Activated CD8-positive, alpha-beta memory T cell treated with anti-CD3 and anti-CD28 coated beads, Interleukin-2, amount 10 ng/mL, durations not matched to agents 7 days and 5 days (primary cell): ENCODE measurements at regions of chr7 and their contacts with region 1.

Region 1: GRCh38 chr7:23273141-23273599 is 26.0 kb upstream of the MALSU1 start:
- DNase-seq: peak; percentile 94
- ATAC-seq: peak; percentile 98
- H3K4me3 Mint-ChIP-seq: peak overlapping the region; percentile 65
- H3K27ac Mint-ChIP-seq: peak overlapping the region; percentile 64
- H3K4me1 Mint-ChIP-seq: peaks cover 16% of the 10 kb centered on the region
- H3K27me3 Mint-ChIP-seq: peaks cover 5% of the 10 kb centered on the region

Region 2: GRCh38 chr7:23298885-23299769 is 26.0 kb after region 1 on chr7 and contains the start of gene MALSU1:
- CTCF ChIA-PET with region 1: interaction called, 25 read pairs
- DNase-seq: peak; percentile 98
- ATAC-seq: peak; percentile 100
- H3K4me3 Mint-ChIP-seq: peak within 1 kb of the TSS; percentile 88
- H3K27ac Mint-ChIP-seq: peak within 1 kb of the TSS; percentile 94
- H3K4me1 Mint-ChIP-seq: peaks cover 33% of the 10 kb centered on the region
- H3K27me3 Mint-ChIP-seq: no peaks in the 10 kb centered on the region
- total RNA-seq, gene MALSU1: 51.3 to 59.5 TPM

Region 3: GRCh38 chr7:23346316-23346715 is 73.1 kb after region 1 on chr7:
- CTCF ChIA-PET with region 1: interaction called, 12 read pairs
- DNase-seq: no peak
- ATAC-seq: peak; percentile 82
- H3K4me3 Mint-ChIP-seq: peak overlapping the region; percentile 66
- H3K27ac Mint-ChIP-seq: peak overlapping the region; percentile 55
- H3K4me1 Mint-ChIP-seq: peaks cover 34% of the 10 kb centered on the region
- H3K27me3 Mint-ChIP-seq: peaks cover 27% of the 10 kb centered on the region

Region 4: GRCh38 chr7:23462846-23463245 is 189.7 kb after region 1 on chr7:
- CTCF ChIA-PET with region 1: interaction called, 29 read pairs
- DNase-seq: no peak
- ATAC-seq: no peak
- H3K4me3 Mint-ChIP-seq: no peak overlapping the region
- H3K27ac Mint-ChIP-seq: no peak overlapping the region
- H3K4me1 Mint-ChIP-seq: peaks cover 11% of the 10 kb centered on the region
- H3K27me3 Mint-ChIP-seq: peaks cover 77% of the 10 kb centered on the region

Region 5: DNA sequence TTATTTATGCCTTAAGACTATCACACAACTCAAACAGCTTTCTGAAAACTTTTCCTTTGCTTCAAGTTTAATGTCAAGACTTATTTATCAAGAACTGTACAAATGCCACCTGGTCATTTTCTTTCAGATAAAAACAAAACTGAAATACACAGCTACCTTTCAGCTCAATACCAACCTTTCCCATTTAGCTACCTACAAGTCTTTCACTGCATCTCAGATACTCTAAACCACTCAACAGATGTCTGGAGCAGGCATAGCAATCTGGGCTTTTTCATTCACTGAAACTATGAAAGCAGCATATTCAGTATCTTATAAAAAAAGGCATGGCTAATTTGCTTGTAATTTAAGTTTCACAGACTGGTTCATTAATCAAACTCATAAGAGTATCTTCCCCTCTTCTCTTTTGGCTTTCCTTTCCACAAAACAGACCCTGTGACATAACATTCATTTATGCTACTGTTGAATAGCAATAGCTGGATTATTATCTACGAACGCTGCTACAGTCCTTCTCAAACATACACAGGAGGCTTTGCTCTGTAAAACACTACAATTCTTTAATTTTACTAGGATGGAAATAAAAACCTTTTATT is 250.4 kb after region 1 on chr7:
- CTCF ChIA-PET with region 1: interaction called, 11 read pairs
- DNase-seq: no peak
- ATAC-seq: no peak
- H3K4me3 Mint-ChIP-seq: no peak overlapping the region
- H3K27ac Mint-ChIP-seq: no peak overlapping the region
- H3K4me1 Mint-ChIP-seq: peaks cover 47% of the 10 kb centered on the region
- H3K27me3 Mint-ChIP-seq: no peaks in the 10 kb centered on the region

Region 6: GRCh38 chr7:23546897-23547572 is 273.9 kb after region 1 on chr7:
- CTCF ChIA-PET with region 1: interaction called, 70 read pairs
- DNase-seq: peak; percentile 86
- ATAC-seq: peak; percentile 93
- H3K4me3 Mint-ChIP-seq: no peak overlapping the region
- H3K27ac Mint-ChIP-seq: no peak overlapping the region
- H3K4me1 Mint-ChIP-seq: peaks cover 11% of the 10 kb centered on the region
- H3K27me3 Mint-ChIP-seq: peaks cover 5% of the 10 kb centered on the region